Activated T-helper 1 cell treated with anti-CD3 and anti-CD28 coated beads, Interleukin-12 subunit alpha, Interleukin-12 subunit beta, Interleukin-2, Interleukin-4 antibody, amounts not matched to agents 30 ng/mL and 10 ng/mL and 1 ng/mL, durations not matched to agents 14 hours and 24 hours and 36 hours (primary cell): ENCODE measurements at regions of chr5 and their contacts with region 1.

Region 1: DNA sequence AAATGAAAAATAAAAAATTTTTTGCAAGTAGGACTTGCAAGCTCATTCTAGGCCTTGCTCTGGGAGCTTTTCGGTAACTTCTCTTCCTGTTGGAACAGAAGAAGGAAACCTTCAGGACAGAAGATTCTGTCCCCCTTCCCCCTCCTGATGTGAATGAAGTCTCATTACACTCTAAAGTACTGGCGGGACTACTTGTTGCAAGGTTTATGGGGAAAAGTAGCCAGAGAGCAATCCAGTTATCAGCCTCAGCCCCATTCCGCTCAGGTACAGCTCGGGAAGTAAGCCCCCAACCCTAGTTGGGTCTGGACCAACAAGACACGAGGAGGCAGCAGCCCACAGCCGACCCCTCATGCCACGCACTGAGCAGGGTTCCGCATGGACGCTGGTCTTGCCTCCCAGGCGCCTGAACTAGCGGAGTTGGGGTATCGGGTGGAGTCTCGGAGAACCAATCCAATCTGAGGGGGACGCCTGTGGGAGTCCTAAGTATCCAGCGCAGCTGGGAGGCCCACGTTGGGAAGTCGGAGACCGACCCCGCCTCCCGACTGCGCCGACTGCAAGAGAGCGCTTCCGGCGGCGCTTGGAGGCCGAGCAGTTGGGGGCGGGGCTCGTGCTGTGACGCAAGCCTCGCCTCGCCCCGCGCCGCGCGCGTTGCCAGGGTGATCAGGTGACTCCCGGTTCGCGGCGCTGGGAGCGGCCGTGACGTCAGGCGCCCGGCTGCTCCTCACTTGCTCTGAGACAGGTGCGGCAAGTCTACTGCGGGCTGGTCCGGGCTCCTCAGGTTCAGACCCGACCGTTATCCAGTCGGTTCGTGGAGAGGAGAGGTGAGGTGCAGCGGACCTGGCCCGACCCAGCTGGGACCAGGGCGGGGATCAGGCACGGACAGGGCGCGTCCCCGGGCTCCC is at the start of gene CYSTM1:
- DNase-seq: peak; percentile 95
- H3K4me3 Mint-ChIP-seq: peak within 1 kb of the TSS; percentile 94
- H3K27ac Mint-ChIP-seq: peak within 1 kb of the TSS; percentile 92
- H3K4me1 Mint-ChIP-seq: peaks cover 18% of the 10 kb centered on the region
- H3K27me3 Mint-ChIP-seq: peaks cover 19% of the 10 kb centered on the region
- total RNA-seq, gene CYSTM1: 16.6 and 17.2 TPM in 2 replicates

Region 2: GRCh38 chr5:139863855-139864558 is 310.7 kb before region 1 on chr5:
- intact Hi-C with region 1: no loop called
- DNase-seq: peak; percentile 7
- H3K4me3 Mint-ChIP-seq: no peak overlapping the region
- H3K27ac Mint-ChIP-seq: no peak overlapping the region
- H3K4me1 Mint-ChIP-seq: no peaks in the 10 kb centered on the region
- H3K27me3 Mint-ChIP-seq: peaks cover 8% of the 10 kb centered on the region

Region 3: GRCh38 chr5:140107312-140108083 is 67.2 kb before region 1 on chr5:
- intact Hi-C with region 1: loop called (anchors 2 kb)
- DNase-seq: peak; percentile 90
- H3K4me3 Mint-ChIP-seq: peak overlapping the region; percentile 90
- H3K27ac Mint-ChIP-seq: peak overlapping the region; percentile 93
- H3K4me1 Mint-ChIP-seq: peaks cover 41% of the 10 kb centered on the region
- H3K27me3 Mint-ChIP-seq: peaks cover 60% of the 10 kb centered on the region

Region 4: DNA sequence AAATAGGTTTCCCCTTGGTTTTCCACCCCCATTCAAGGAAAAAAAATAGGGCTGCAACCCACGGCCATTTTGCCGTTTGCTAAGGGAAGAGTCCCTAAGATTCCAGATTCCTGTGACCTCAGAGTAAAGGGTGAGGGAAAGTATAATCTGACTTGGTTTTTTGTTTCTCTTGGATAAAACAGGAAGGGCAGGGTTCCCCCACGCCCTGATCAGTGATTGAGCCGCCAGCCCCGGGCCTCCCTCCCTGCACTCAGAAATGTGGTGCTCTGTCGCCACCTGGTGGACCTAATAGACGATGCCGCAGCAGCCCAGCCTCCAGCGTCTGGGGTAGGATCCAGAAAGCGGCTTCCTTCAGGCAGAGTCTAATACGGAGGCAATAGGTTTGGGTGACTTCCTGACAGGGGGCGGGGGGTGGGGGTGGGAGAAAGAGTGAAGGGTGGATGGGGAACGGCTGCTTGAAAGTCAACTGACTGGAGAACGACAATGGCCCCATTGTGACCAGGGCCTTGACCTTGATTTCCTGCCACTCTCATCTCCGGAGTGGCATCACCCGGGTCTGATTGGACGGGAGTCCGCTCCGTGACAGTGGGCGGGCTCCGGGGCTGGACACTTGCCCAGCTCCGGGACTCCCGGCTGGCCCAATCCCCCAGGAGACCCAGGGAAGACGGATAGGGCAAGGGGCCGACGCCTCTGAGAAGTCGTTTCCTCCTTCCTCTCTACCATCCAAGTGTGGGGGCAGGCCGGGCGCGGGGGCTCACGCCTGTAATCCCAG is 17.5 kb before region 1 on chr5:
- intact Hi-C with region 1: loop called (anchors 1 kb)
- DNase-seq: peak; percentile 76
- H3K4me3 Mint-ChIP-seq: peak overlapping the region; percentile 41
- H3K27ac Mint-ChIP-seq: no peak overlapping the region
- H3K4me1 Mint-ChIP-seq: no peaks in the 10 kb centered on the region
- H3K27me3 Mint-ChIP-seq: peaks cover 4% of the 10 kb centered on the region

Region 5: GRCh38 chr5:140251527-140251973 is 76.8 kb after region 1 on chr5:
- intact Hi-C with region 1: loop called (anchors 1 kb)
- DNase-seq: peak; percentile 69
- H3K4me3 Mint-ChIP-seq: peak overlapping the region; percentile 66
- H3K27ac Mint-ChIP-seq: peak overlapping the region; percentile 78
- H3K4me1 Mint-ChIP-seq: peaks cover 58% of the 10 kb centered on the region
- H3K27me3 Mint-ChIP-seq: no peaks in the 10 kb centered on the region

Region 6: DNA sequence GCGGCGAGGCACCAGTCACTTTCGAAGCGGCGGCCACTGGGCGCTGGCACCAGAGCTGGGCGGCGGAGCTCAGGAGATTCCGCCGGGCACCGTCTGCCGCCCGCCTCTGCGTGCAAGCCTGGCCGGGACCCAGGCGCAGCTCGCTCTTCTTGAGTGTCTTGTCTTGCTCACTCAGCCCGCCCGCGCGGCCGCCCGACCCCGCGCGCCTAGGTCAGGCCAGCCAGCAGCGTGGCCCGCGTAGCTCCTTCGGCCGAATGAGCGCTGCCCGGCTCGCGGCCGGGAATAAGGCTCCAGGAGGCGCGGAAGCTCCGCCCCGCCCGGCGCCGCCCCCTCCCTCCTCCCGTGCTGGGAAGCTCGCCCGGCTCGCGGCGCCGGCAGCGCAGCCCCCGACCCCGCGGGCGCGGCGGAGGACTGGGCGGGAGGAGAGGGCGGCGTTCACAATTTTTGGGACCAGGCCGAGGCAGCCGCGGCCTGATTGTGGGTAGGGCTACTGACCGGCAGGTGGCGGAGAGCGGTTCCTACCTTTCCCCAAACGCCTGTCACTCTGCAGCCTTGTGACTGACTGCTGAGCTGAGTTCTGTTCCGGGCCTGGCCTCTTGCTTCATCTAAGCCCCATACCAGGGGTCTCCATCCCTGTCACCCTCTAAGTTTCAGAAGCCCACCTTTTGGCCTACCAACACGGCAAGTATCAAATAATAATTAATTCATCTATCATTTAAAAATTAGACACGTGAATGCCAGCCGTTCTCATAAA is 171.8 kb after region 1 on chr5 and contains the start of gene HBEGF:
- intact Hi-C with region 1: loop called (anchors 5 kb)
- DNase-seq: peak; percentile 55
- H3K4me3 Mint-ChIP-seq: peak within 1 kb of the TSS; percentile 87
- H3K27ac Mint-ChIP-seq: peak within 1 kb of the TSS; percentile 99
- H3K4me1 Mint-ChIP-seq: peaks cover 77% of the 10 kb centered on the region
- H3K27me3 Mint-ChIP-seq: peaks cover 1% of the 10 kb centered on the region
- total RNA-seq, gene HBEGF: 28.5 and 28.9 TPM in 2 replicates

Region 7: DNA sequence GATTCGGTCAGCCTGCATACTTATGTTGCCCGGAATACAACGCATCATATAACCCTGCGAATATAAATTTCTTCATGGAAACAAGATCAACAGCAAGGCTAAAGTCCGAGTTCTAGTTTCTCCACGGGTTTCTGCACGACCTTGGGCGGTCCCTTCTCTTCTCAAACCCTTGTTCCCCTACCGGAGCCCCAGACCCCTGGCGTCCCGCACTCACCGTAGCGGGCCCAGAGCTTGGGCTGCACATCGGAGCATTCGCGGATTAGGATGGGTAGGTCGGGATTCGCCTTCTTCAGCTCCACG is 472.3 kb after region 1 on chr5:
- intact Hi-C with region 1: loop called (anchors 2 kb)
- DNase-seq: no peak
- H3K4me3 Mint-ChIP-seq: peak overlapping the region; percentile 99
- H3K27ac Mint-ChIP-seq: peak overlapping the region; percentile 67
- H3K4me1 Mint-ChIP-seq: peaks cover 38% of the 10 kb centered on the region
- H3K27me3 Mint-ChIP-seq: no peaks in the 10 kb centered on the region

Region 8: GRCh38 chr5:140710899-140711552 is 536.3 kb after region 1 on chr5:
- intact Hi-C with region 1: loop called (anchors 5 kb)
- DNase-seq: peak; percentile 87
- H3K4me3 Mint-ChIP-seq: peak overlapping the region; percentile 91
- H3K27ac Mint-ChIP-seq: peak overlapping the region; percentile 94
- H3K4me1 Mint-ChIP-seq: peaks cover 22% of the 10 kb centered on the region
- H3K27me3 Mint-ChIP-seq: peaks cover 8% of the 10 kb centered on the region